ENCODE measurements at regions of chr19 and their contacts with region 1.

Region 1: DNA sequence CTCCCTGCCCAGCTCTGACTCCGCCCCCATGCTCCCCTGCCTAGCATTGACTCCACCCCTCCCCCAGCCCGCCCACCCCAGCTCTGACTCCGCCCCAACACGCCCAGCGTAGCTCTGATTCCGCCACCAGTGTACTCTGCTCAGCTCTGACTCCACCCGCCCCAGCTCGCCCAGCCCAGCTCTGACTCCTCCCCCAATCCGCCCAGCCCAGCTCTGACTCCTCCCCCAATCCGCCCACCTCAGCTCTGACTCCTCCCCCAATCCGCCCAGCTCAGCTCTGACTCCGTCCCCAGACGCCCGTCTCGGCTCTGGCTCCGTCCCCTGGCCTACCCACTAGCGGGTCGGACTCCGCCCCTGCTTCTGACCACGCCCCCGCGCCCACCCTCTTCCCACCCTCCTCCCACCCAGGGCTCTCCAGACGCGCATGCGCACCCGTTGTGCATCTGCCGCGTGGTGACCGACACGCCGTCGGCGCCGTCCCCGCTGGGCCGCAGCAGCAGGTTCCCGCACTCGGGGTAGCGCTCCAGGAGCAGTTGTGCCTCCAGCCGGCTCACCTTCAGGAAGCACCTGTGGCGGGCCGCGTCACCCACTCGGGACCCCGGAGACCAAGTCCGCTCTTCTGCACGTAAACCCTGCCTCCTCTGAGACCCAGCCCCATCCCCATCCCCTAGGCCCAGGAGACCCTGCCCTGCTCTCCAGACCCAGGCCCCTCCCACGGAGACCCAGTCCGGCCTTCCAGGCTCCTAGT is 10.2 kb downstream of the STAP2 start:
- DNase-seq: peak; percentile 83 to 86 (median 84)
- H3K4me3 ChIP-seq: peak overlapping the region in 2 of 3 experiments; percentile 27 to 65
- H3K4me3 Mint-ChIP-seq: peak overlapping the region; percentile 76 to 85
- H3K27ac ChIP-seq: no peak overlapping the region
- H3K27ac Mint-ChIP-seq: peak overlapping the region in 1 of 7 donors; percentile 36
- H3K4me1 ChIP-seq: peaks cover 23 to 26% of the 10 kb centered on the region in 2 donors
- H3K4me1 Mint-ChIP-seq: peaks cover 30% of the 10 kb centered on the region
- H3K27me3 ChIP-seq: peaks cover 2 to 28% of the 10 kb centered on the region in 2 donors
- H3K27me3 Mint-ChIP-seq: peaks cover 28 to 45% (median 41%) of the 10 kb centered on the region in 3 donors
- CTCF ChIP-seq: no peak

Region 2: GRCh38 chr19:4284176-4284958 is 44.0 kb before region 1 on chr19:
- intact Hi-C with region 1: no loop called
- DNase-seq: no peak
- H3K4me3 ChIP-seq: no peak overlapping the region
- H3K4me3 Mint-ChIP-seq: no peak overlapping the region
- H3K27ac ChIP-seq: no peak overlapping the region
- H3K27ac Mint-ChIP-seq: no peak overlapping the region
- H3K4me1 ChIP-seq: no peaks in the 10 kb centered on the region
- H3K4me1 Mint-ChIP-seq: peaks cover 5% of the 10 kb centered on the region
- H3K27me3 ChIP-seq: peaks cover 11 to 14% of the 10 kb centered on the region in 2 donors
- H3K27me3 Mint-ChIP-seq: peaks cover 24 to 39% (median 30%) of the 10 kb centered on the region in 3 donors
- CTCF ChIP-seq: no peak

Region 3: GRCh38 chr19:4342615-4343369 is 14.4 kb after region 1 on chr19:
- intact Hi-C with region 1: loop called (anchors 1 to 2 kb)
- DNase-seq: peak; percentile 99 to 100 (median 100)
- H3K4me3 ChIP-seq: peak overlapping the region; percentile 52 to 84 (median 70)
- H3K4me3 Mint-ChIP-seq: peak overlapping the region; percentile 91 to 93
- H3K27ac ChIP-seq: peak overlapping the region; percentile 78 to 85
- H3K27ac Mint-ChIP-seq: peak overlapping the region; percentile 91 to 98 (median 95)
- H3K4me1 ChIP-seq: peaks cover 27 to 37% of the 10 kb centered on the region in 2 donors
- H3K4me1 Mint-ChIP-seq: peaks cover 35% of the 10 kb centered on the region
- H3K27me3 ChIP-seq: no peaks in the 10 kb centered on the region
- H3K27me3 Mint-ChIP-seq: peaks cover 0 to 13% (median 11%) of the 10 kb centered on the region in 3 donors
- CTCF ChIP-seq: peak; percentile 17

Region 4: DNA sequence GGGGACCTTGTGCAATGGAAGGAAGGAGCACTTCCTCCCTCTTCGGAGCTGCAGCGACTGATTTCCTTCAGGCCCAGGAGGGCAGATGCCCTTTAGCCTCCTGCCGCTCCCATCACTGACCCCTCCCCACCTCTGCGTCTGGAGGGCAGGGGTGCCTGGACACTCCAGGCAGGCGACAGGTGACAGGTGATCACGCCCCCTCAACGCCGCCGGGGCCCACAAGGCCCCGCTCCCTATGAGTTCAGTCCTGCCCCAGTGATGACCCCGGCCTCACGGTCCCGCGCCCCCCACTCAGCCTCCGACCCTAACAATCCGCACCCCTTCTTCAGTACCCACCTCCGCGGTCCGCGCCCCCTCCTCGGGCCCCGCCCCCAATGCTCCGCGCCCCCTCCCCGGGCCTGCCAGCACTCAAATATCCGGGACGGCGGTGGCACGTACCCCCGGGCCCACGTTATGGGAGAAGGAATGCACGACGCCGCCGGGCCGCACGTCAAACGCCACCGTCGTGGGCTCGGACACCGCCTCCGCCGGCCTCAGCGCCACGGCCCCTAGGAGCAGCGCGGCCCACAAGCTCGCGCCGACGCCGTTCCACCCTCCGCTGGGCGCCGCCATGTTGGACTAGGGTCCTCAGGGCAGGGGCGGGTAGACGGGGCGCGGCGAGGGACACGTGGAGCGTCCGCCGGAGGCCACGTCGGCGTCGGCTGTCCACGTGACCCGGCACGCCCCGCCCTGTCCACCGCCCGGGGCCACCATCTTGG is 341.5 kb after region 1 on chr19 and contains the start of gene MYDGF:
- intact Hi-C with region 1: loop called in 1 of 2 experiments (anchors 10 kb)
- DNase-seq: peak; percentile 87 to 92 (median 89)
- H3K4me3 ChIP-seq: peak within 1 kb of the TSS; percentile 75 to 95 (median 85)
- H3K4me3 Mint-ChIP-seq: peak within 1 kb of the TSS; percentile 87 to 91
- H3K27ac ChIP-seq: peak within 1 kb of the TSS; percentile 82 to 85
- H3K27ac Mint-ChIP-seq: peak within 1 kb of the TSS; percentile 82 to 96 (median 93)
- H3K4me1 ChIP-seq: peaks cover 13 to 25% of the 10 kb centered on the region in 2 donors
- H3K4me1 Mint-ChIP-seq: peaks cover 14% of the 10 kb centered on the region
- H3K27me3 ChIP-seq: no peaks in the 10 kb centered on the region
- H3K27me3 Mint-ChIP-seq: peaks cover 0 to 2% (median 0%) of the 10 kb centered on the region in 3 donors
- CTCF ChIP-seq: no peak
- polyA plus RNA-seq, gene MYDGF: 64.6 to 165 (median 160) TPM